ENCODE measurements at regions of chr3 and their contacts with region 1.

Region 1: DNA sequence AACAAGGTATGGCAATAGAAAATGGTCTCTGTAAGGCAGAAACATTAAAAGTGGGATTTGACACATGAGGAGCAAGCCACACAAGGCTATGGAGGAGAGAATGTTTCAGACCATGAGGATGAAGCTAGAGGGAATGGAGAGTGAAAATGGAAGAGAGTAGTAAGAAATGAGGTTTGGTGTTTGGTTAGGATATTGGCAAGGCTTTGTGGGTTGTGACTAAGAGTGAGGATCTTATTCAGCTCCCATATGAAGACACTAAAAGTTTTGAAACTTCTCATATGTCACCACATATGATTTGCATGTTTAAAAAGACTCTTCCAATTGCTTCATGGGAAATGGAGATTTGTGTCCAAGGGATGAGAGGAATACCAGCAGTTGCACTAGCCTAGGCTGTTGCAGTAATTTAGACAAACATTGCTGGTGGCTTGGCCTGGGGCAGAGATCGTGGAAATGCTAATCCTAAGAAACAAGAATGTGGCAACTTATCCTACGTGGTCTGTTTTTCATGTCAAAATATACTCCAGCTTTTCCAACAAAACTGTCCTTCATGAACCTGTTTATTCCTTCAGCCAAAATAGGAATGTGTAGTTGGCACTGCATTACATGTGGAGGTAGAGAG is 749.0 kb downstream of the PDCD6IP start:
- DNase-seq: no peak
- H3K4me3 ChIP-seq: no peak overlapping the region
- H3K27ac ChIP-seq: no peak overlapping the region
- H3K27me3 ChIP-seq: no peaks in the 10 kb centered on the region
- CTCF ChIP-seq: no peak

Region 2: GRCh38 chr3:34571306-34572093 is 24.1 kb after region 1 on chr3:
- intact Hi-C with region 1: loop called in 1 of 2 experiments (anchors 2 kb)
- DNase-seq: no peak
- H3K4me3 ChIP-seq: no peak overlapping the region
- H3K27ac ChIP-seq: no peak overlapping the region
- H3K27me3 ChIP-seq: peaks cover 0 to 7% (median 0%) of the 10 kb centered on the region in 45 donors
- CTCF ChIP-seq: no peak

Region 3: DNA sequence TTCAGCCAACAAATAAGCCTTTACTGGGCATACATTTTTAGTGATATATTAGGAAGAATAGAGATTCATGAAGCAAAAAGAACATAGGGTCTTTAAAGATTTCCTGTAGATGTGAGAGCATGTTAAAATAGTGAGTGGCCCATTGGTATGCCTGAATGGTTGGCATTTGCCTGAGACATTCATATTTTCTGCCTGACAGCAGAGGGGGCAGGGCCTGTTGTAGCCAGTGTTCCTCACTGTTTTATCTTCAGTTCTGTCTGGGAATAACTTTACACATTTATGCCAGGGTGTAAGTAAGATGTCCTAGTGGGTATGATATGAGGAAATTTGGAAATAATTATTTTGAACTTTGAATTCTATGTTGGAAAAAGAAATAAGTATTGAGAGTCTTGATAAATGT is 387.3 kb after region 1 on chr3:
- intact Hi-C with region 1: loop called in 1 of 2 experiments (anchors 10 kb)
- DNase-seq: no peak
- H3K4me3 ChIP-seq: no peak overlapping the region
- H3K27ac ChIP-seq: no peak overlapping the region
- H3K27me3 ChIP-seq: no peaks in the 10 kb centered on the region
- CTCF ChIP-seq: no peak

Measured in dorsolateral prefrontal cortex (tissue), 120 donors.